ENCODE measurements at regions of chr11 and their contacts with region 1.

Region 1: DNA sequence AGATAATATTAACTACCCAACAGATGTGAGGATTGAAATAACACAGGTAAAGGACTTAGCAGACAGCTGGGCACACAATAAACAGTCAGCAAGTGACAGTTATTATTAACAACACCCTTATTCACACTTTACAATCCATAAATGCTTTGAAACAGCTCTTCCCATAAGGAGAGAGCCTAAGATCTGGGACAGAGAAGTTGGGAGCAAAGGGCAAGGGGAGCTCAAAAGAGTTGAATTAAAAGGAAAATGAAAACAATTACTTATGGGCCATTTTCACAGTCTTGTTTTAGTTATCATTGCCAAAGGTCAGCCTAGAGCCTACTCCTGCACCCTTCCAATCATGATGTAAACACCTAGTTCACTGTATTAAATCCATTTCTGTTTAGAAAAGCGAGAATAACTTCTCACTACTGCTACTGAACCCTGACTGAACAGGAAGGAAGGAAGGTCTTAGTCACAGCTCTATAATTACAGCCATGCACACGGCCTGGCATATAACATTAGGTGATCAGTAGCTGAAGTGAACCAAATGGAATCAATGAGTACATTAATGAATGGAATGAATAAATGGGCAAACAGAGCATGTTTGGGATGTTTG is 111.3 kb downstream of the PLEKHA7 start:
- DNase-seq: no peak
- H3K4me3 Mint-ChIP-seq: peak overlapping the region; percentile 31
- H3K27ac Mint-ChIP-seq: peak overlapping the region; percentile 99
- H3K4me1 Mint-ChIP-seq: peaks cover 50% of the 10 kb centered on the region
- H3K27me3 Mint-ChIP-seq: no peaks in the 10 kb centered on the region

Region 2: GRCh38 chr11:16572945-16573344 is 329.9 kb before region 1 on chr11:
- intact Hi-C with region 1: no loop called
- DNase-seq: no peak
- H3K4me3 Mint-ChIP-seq: no peak overlapping the region
- H3K27ac Mint-ChIP-seq: no peak overlapping the region
- H3K4me1 Mint-ChIP-seq: no peaks in the 10 kb centered on the region
- H3K27me3 Mint-ChIP-seq: no peaks in the 10 kb centered on the region

Region 3: DNA sequence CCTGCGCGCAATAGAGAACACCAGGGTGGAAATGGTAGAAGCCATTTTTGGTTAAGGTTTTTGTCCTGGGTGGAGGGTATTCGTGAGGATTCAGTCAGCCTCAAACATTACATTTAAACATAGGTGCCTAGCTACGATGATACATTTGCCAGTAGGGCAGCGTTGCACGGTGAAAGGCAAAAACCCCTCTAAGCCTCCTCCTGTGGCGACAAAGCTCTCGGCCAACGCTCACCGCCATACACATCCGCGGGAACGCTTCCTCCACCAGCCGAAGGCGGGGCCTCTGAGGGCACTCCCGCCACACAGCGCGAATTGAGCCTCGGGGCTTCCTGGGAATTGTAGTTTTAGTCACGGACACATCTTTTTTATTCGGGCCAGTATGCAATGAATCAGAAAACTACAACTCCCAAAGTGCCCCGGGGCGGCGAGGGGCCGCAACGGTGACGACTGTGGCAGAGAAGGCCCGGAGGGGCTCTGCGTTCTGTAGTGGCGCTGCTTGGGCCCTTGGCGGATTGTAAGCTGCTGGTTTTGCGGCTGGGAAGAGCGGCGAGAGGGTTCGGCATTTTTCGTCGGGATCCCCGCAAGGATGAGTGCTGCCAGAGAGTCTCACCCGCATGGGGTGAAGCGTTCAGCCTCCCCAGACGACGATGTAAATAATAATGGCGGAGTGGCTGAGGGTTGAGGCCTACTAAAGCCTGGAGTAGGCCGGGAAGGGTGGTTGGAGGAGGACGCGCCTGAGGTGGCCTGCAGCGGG is 164.5 kb before region 1 on chr11 and contains the start of gene C11orf58:
- intact Hi-C with region 1: loop called (anchors 5 kb)
- DNase-seq: peak; percentile 94
- H3K4me3 Mint-ChIP-seq: peak within 1 kb of the TSS; percentile 74
- H3K27ac Mint-ChIP-seq: peak within 1 kb of the TSS; percentile 73
- H3K4me1 Mint-ChIP-seq: peaks cover 20% of the 10 kb centered on the region
- H3K27me3 Mint-ChIP-seq: peaks cover 3% of the 10 kb centered on the region
- total RNA-seq, gene C11orf58: 135 and 162 TPM in 2 replicates

Region 4: DNA sequence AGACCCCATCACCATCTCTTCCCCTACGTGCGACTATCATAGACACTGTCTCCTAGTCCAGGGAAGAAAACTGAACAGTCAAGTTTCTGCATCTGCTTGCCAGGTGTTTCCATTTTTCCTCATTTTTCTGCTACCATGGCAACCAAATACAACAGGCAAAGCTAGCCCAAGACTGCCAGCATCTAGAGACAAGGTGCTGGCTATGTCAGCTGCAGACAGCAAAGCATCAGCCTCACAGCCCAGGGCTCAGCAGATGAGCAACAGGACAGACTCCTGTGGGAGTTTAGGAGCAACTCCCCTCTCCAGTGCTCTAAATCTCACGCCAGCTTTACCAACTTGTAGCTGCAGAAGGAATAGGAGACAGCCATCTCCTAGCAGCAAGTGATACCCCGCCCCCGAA is 40.1 kb before region 1 on chr11:
- intact Hi-C with region 1: loop called (anchors 1 kb)
- DNase-seq: no peak
- H3K4me3 Mint-ChIP-seq: peak overlapping the region; percentile 66
- H3K27ac Mint-ChIP-seq: peak overlapping the region; percentile 53
- H3K4me1 Mint-ChIP-seq: peaks cover 41% of the 10 kb centered on the region
- H3K27me3 Mint-ChIP-seq: no peaks in the 10 kb centered on the region

Region 5: GRCh38 chr11:16924826-16925560 is 22.1 kb after region 1 on chr11:
- intact Hi-C with region 1: loop called (anchors 1 kb)
- DNase-seq: no peak
- H3K4me3 Mint-ChIP-seq: peak overlapping the region; percentile 77
- H3K27ac Mint-ChIP-seq: no peak overlapping the region
- H3K4me1 Mint-ChIP-seq: peaks cover 17% of the 10 kb centered on the region
- H3K27me3 Mint-ChIP-seq: peaks cover 46% of the 10 kb centered on the region